ENCODE measurements at regions of chr4 and their contacts with region 1.

Region 1: DNA sequence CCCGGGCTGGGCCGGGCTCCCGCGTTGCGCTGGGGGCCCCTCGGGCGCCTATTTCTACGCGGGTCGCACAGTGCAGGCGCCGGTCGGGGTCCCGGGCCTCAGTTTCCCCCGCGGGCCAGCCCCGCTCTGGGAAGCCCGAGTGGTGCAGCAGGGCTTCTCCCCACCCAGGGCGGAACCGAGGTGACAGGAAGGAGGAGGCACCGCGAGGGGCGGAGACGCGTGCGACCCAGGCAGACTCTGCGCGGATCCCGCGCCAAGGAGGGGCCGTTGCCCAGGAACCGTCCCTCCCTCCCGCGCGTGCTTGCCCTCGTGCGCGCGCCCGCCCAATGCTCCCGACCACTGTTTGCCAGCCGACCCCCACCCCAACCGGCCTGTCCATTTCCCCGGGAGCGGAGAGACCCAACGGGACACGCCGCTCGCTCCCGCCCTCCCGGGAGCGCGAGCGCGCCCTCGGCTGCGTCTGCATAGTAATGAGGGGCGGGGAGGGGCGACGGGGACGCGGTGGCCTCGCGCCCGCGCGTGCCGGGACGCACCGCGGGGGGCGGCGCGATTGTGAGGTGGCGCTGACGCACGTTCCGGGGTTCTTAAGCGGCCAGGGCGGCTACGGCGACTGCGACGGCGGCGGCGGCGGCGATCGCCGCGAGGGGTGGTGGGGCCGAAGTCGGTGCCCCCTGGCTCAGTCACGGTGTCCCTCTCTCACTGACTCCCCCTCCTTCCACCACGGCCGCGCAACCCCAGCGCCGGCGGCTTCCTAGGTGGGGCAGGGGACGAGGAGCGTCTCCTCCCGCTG is at the start of gene CPEB2:
- H3K4me3 Mint-ChIP-seq: peak within 1 kb of the TSS; percentile 80
- H3K27ac Mint-ChIP-seq: peak within 1 kb of the TSS; percentile 98
- H3K4me1 Mint-ChIP-seq: no peaks in the 10 kb centered on the region
- H3K27me3 Mint-ChIP-seq: no peaks in the 10 kb centered on the region

Region 2: GRCh38 chr4:13484122-13484748 is 1517.8 kb before region 1 on chr4 and contains the start of gene RAB28:
- intact Hi-C with region 1: loop called (anchors 10 kb)
- H3K4me3 Mint-ChIP-seq: peak within 1 kb of the TSS; percentile 77
- H3K27ac Mint-ChIP-seq: peak within 1 kb of the TSS; percentile 90
- H3K4me1 Mint-ChIP-seq: peaks cover 24% of the 10 kb centered on the region
- H3K27me3 Mint-ChIP-seq: peaks cover 24% of the 10 kb centered on the region

Region 3: GRCh38 chr4:13654158-13654797 is 1347.8 kb before region 1 on chr4:
- intact Hi-C with region 1: loop called (anchors 5 kb)
- H3K4me3 Mint-ChIP-seq: peak overlapping the region; percentile 75
- H3K27ac Mint-ChIP-seq: no peak overlapping the region
- H3K4me1 Mint-ChIP-seq: peaks cover 19% of the 10 kb centered on the region
- H3K27me3 Mint-ChIP-seq: peaks cover 16% of the 10 kb centered on the region

Region 4: GRCh38 chr4:14856076-14856933 is 145.8 kb before region 1 on chr4:
- intact Hi-C with region 1: loop called (anchors 1 kb)
- H3K4me3 Mint-ChIP-seq: no peak overlapping the region
- H3K27ac Mint-ChIP-seq: peak overlapping the region; percentile 86
- H3K4me1 Mint-ChIP-seq: peaks cover 40% of the 10 kb centered on the region
- H3K27me3 Mint-ChIP-seq: peaks cover 42% of the 10 kb centered on the region

Region 5: GRCh38 chr4:14908635-14909034 is 93.4 kb before region 1 on chr4:
- intact Hi-C with region 1: loop called (anchors 10 kb)
- H3K4me3 Mint-ChIP-seq: no peak overlapping the region
- H3K27ac Mint-ChIP-seq: no peak overlapping the region
- H3K4me1 Mint-ChIP-seq: peaks cover 27% of the 10 kb centered on the region
- H3K27me3 Mint-ChIP-seq: peaks cover 32% of the 10 kb centered on the region

Region 6: GRCh38 chr4:15149839-15150476 is 147.9 kb after region 1 on chr4:
- intact Hi-C with region 1: no loop called
- H3K4me3 Mint-ChIP-seq: no peak overlapping the region
- H3K27ac Mint-ChIP-seq: no peak overlapping the region
- H3K4me1 Mint-ChIP-seq: peaks cover 7% of the 10 kb centered on the region
- H3K27me3 Mint-ChIP-seq: no peaks in the 10 kb centered on the region

Region 7: GRCh38 chr4:15681207-15682015 is 679.3 kb after region 1 on chr4 and contains the start of gene FAM200B:
- intact Hi-C with region 1: loop called (anchors 5 kb)
- H3K4me3 Mint-ChIP-seq: peak within 1 kb of the TSS; percentile 93
- H3K27ac Mint-ChIP-seq: peak within 1 kb of the TSS; percentile 98
- H3K4me1 Mint-ChIP-seq: peaks cover 62% of the 10 kb centered on the region
- H3K27me3 Mint-ChIP-seq: no peaks in the 10 kb centered on the region